Upper lobe of right lung (tissue), 1 donor: ENCODE measurements at regions of chr18 and their contacts with region 1.

Region 1: DNA sequence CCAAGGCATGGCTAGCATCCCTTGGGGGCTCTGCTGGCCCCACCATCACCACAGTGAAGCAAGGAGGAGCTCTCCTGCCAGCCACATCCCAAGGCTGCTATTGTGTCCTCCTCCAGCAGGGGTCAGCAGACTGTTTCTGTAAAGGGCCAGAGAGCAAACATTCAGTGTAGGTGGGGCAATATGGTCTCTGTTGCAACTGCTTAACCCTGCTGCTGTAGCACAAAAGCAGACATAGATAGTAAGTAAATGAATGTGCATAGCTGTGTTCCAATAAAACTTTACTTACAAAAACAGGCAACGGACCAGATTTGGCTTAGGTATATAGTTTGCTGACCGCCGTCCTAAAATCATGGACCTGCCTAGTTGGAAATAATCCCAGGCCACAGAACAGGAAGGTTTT is 36.4 kb upstream of the ZBTB7C start:
- DNase-seq: peak; percentile 83
- ATAC-seq: peak; percentile 94
- H3K4me3 ChIP-seq: no peak overlapping the region
- H3K27ac ChIP-seq: no peak overlapping the region
- H3K4me1 ChIP-seq: peaks cover 25% of the 10 kb centered on the region
- H3K27me3 ChIP-seq: no peaks in the 10 kb centered on the region
- CTCF ChIP-seq: peak; percentile 92

Region 2: DNA sequence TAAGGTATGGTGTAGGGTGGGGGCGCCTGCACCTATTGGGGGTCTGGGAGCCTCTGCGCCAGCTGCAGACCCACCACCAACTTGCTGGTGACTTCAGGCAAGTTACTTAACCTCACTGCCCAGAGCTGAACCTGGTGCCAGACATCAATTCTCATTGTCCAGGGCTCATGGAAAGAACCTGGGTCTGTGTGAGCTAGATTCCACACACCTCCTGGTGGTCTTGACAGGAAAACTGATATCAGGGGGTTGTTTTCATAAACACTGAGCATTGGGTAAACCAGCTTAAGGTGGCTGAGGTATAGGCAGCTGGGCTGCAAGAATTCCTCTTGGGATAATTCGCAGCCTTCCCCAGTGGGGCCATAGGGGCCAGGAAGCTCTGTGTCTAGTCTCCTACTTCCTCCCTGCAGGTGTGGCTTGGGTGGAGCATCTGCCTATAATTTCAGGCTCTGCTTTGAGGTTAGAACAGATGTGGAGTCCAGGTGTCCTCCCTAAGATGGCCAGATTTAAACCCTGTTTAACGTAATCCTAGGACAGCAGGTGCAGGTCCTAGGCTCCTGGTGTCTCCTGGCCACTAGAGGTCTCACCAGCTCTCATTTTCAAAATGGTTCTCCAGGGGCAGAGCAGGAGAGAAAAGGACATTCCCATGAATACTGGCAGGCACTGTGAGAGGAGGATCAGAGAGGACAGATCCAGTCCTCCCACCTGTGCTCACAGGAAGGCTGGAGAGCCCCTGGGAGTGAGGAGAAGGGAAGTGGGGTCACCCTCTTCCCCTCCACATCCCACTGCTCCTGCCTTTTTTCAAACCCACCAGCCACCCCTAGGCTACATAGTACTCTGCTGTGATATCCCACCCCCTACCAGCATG is 414.7 kb before region 1 on chr18:
- intact Hi-C with region 1: loop called (anchors 5 kb)
- DNase-seq: peak; percentile 50
- ATAC-seq: peak; percentile 79
- H3K4me3 ChIP-seq: no peak overlapping the region
- H3K27ac ChIP-seq: no peak overlapping the region
- H3K4me1 ChIP-seq: peaks cover 21% of the 10 kb centered on the region
- H3K27me3 ChIP-seq: no peaks in the 10 kb centered on the region
- CTCF ChIP-seq: peak; percentile 74